Mammary epithelial cell (primary cell): ENCODE measurements at regions of chr15 and their contacts with region 1.

Region 1: DNA sequence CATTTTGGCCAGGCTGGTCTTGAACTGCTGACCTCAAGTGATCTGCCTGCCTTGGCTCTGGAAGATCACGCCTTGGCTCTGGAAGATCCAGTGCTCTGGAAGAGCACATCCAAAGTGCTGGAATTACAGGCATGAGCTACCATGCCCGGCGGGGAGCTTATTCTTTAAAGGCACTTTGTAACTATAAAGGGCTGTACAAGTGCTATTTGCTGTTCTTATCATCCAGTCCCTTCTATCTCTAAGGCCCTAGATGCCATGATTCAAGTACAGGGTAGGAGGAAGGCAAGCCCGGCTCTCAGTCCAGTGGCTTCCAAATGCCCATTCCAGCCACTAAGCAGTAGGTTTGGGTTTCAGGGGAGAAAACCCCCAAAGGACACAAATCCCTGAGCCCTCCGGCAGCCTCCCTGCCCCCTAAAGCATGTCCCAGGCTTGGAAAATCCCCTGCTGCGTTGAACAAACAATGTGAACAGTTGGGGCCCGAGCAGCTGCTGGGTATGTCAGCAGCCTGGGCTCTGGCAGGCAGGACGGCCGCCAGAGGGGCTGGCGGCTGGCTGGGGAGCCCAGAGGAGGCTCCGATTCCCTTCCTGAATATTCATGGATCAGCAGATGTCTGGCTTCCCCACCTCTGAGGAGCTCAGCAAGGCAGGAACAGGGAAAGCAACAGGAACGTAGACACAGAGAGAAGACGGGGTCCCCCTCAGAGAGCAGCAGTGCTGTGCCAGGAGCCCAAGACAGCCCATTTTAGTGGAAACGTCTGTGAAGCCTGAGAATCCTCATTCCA is 7.7 kb downstream of the IGDCC4 start:
- DNase-seq: no peak
- H3K4me3 ChIP-seq: no peak overlapping the region
- H3K27ac ChIP-seq: no peak overlapping the region
- H3K4me1 ChIP-seq: no peaks in the 10 kb centered on the region
- H3K27me3 ChIP-seq: peaks cover 4% of the 10 kb centered on the region
- CTCF ChIP-seq: no peak

Region 2: GRCh38 chr15:65336493-65337455 is 78.3 kb before region 1 on chr15:
- CTCF ChIA-PET with region 1: no interaction called
- dilution Hi-C with region 1: no loop called
- in situ Hi-C with region 1: no loop called
- intact Hi-C with region 1: no loop called
- DNase-seq: no peak
- H3K4me3 ChIP-seq: no peak overlapping the region
- H3K27ac ChIP-seq: no peak overlapping the region
- H3K4me1 ChIP-seq: no peaks in the 10 kb centered on the region
- H3K27me3 ChIP-seq: peaks cover 2% of the 10 kb centered on the region
- CTCF ChIP-seq: no peak

Region 3: GRCh38 chr15:65368302-65369211 is 46.5 kb before region 1 on chr15:
- CTCF ChIA-PET with region 1: no interaction called
- dilution Hi-C with region 1: loop called (anchors 5 kb)
- in situ Hi-C with region 1: no loop called
- intact Hi-C with region 1: no loop called
- DNase-seq: no peak
- H3K4me3 ChIP-seq: no peak overlapping the region
- H3K27ac ChIP-seq: no peak overlapping the region
- H3K4me1 ChIP-seq: no peaks in the 10 kb centered on the region
- H3K27me3 ChIP-seq: no peaks in the 10 kb centered on the region
- CTCF ChIP-seq: no peak

Region 4: GRCh38 chr15:65550681-65551098 is 135.7 kb after region 1 on chr15:
- CTCF ChIA-PET with region 1: no interaction called
- dilution Hi-C with region 1: no loop called
- in situ Hi-C with region 1: no loop called
- intact Hi-C with region 1: no loop called
- DNase-seq: peak; percentile 16
- H3K4me3 ChIP-seq: no peak overlapping the region
- H3K27ac ChIP-seq: no peak overlapping the region
- H3K4me1 ChIP-seq: no peaks in the 10 kb centered on the region
- H3K27me3 ChIP-seq: no peaks in the 10 kb centered on the region
- CTCF ChIP-seq: no peak